Activated T-helper 1 cell treated with anti-CD3 and anti-CD28 coated beads, Interleukin-12 subunit alpha, Interleukin-12 subunit beta, Interleukin-2, Interleukin-4 antibody, amounts not matched to agents 30 ng/mL and 10 ng/mL and 1 ng/mL, durations not matched to agents 14 hours and 24 hours and 36 hours (primary cell): ENCODE measurements at regions of chr4 and their contacts with region 1.

Region 1: DNA sequence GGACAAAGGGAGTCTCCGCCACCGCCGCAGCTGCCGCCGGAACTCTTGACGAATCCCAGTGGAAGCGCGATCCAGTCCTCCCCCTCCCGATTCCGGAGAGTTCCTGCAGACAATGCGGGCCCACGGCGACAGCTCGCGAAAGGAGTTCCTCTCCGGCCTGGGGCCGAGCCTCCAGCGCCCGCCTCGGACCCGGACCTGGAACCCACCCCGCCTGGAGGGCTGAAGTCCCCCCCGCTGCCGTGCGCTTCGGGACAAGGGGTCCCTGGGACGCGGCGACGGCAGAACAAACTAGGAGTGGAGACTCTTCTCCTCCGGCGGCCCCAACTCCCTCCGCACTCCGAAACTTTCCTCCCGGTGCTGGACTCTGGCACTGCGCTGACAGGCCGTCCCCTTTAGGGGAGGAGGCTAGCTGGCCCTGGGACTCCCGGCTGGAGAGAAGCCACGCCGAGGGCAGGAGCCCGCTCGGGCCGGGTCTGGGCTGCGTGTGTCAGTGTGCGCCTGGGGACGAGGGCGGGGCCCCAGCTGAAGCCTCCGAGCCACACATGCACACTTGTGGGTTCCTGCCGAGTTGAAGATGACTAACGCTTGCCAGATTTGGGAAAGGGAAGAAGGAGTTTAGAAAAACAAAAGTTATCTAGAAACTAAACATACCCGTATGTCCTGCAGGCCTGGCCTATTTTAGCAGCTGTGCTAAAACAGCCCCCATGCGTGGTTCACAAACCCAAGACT is at the start of gene ANTXR2:
- DNase-seq: peak; percentile 73
- H3K4me3 Mint-ChIP-seq: peak within 1 kb of the TSS; percentile 99
- H3K27ac Mint-ChIP-seq: peak within 1 kb of the TSS; percentile 98
- H3K4me1 Mint-ChIP-seq: peaks cover 78% of the 10 kb centered on the region
- H3K27me3 Mint-ChIP-seq: peaks cover 1% of the 10 kb centered on the region
- total RNA-seq, gene ANTXR2: 24.9 and 29.8 TPM in 2 replicates

Region 2: DNA sequence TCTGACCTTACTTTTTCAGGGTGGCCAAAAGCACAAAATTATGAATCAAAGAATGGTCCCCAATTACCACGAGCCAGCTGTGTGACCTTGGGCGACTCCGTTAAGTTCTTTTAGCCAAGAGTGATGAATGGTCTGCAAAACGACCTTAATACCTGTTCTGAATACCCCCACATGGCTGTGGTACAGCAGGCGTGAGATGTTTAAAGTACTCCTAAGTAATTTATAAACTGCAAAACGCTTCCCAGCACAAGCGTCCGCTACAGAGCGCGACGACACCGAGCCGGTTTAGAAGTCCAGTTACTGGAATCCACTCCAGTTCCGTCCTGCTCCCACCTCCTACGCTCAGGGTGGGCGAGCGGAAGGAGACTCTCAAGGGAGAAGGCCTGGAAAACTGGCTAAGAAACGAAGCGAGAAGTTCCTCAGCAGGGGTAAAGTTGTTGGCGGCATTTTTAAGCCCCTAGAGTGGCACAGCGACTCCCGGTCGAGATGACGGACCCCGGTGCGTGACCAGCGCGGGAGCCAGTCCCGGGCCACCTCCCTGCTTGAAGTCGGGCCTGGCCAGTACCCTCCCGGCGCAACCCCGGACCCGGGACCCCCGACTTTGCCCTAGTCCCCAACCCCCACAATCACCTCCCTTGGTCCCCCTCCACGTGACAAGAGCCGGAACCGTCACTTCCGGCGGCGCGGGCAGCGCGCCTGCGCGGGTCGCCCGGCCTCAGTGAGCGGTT is 1297.4 kb before region 1 on chr4:
- intact Hi-C with region 1: loop called (anchors 10 kb)
- DNase-seq: peak; percentile 86
- H3K4me3 Mint-ChIP-seq: peak overlapping the region; percentile 95
- H3K27ac Mint-ChIP-seq: peak overlapping the region; percentile 96
- H3K4me1 Mint-ChIP-seq: peaks cover 38% of the 10 kb centered on the region
- H3K27me3 Mint-ChIP-seq: no peaks in the 10 kb centered on the region

Region 3: DNA sequence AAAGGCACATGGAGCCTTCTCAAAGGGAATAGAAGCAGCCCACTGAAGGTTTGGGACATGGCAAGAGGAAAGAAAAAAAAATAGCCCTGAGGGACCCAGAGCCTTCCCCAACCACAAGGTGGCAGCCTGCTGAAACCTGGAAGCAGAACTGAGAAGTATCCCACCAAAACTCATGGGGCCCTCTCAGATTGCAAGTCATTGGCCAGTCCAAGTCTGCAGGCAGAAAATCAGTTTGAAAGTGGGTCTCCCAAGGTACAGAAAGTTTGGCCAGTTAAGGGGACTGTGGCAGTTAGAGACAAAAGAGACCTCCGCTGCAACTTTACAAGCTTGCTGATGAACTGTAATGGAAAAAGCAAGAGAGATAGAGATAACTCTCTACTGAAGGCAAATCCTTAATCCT is 155.7 kb before region 1 on chr4:
- intact Hi-C with region 1: loop called (anchors 2 kb)
- DNase-seq: peak; percentile 25
- H3K4me3 Mint-ChIP-seq: no peak overlapping the region
- H3K27ac Mint-ChIP-seq: no peak overlapping the region
- H3K4me1 Mint-ChIP-seq: peaks cover 36% of the 10 kb centered on the region
- H3K27me3 Mint-ChIP-seq: no peaks in the 10 kb centered on the region

Region 4: GRCh38 chr4:80036949-80037685 is 35.8 kb before region 1 on chr4:
- intact Hi-C with region 1: loop called (anchors 2 kb)
- DNase-seq: no peak
- H3K4me3 Mint-ChIP-seq: peak overlapping the region; percentile 71
- H3K27ac Mint-ChIP-seq: peak overlapping the region; percentile 93
- H3K4me1 Mint-ChIP-seq: peaks cover 48% of the 10 kb centered on the region
- H3K27me3 Mint-ChIP-seq: no peaks in the 10 kb centered on the region

Region 5: GRCh38 chr4:80138551-80139538 is 65.9 kb after region 1 on chr4:
- intact Hi-C with region 1: loop called (anchors 1 kb)
- DNase-seq: peak; percentile 62
- H3K4me3 Mint-ChIP-seq: peak overlapping the region; percentile 62
- H3K27ac Mint-ChIP-seq: peak overlapping the region; percentile 88
- H3K4me1 Mint-ChIP-seq: peaks cover 72% of the 10 kb centered on the region
- H3K27me3 Mint-ChIP-seq: no peaks in the 10 kb centered on the region

Region 6: DNA sequence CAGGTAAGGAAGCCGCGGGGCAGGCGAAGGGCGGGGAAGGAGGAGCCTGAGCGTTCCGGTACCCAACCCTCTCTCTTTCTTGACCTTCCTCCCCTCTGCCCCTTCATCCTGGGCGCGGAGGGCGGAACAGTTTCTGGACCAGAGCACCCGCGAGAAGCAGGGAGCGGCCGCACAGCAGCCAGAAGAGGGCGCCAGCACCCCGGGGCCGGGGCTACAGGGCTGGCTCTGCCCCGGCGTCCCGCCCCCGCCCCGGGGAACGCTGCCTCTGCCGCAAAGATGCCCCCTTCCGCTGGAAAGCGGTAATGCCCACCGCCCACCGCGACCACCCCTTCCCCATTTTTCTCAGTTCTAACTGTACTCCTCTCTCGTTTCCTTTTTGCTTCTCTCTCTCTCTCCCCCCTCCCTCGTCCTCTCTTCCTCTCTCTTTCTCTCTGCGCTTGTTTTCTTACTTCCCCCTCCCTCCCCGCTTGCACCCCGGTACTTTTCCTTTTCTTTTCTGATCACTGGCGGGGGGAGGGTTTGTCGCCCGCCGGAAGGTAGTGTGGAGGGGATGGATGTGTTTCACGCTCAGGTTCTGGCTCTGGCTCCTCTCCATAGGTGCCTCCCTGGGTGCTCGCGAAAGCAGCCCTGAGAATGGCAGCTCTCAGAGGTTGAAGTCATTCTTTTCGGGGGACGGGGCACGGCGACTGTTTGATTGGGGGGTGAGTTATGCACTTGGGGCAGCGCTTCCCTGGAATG is 111.3 kb after region 1 on chr4:
- intact Hi-C with region 1: loop called (anchors 1 kb)
- DNase-seq: peak; percentile 92
- H3K4me3 Mint-ChIP-seq: peak overlapping the region; percentile 98
- H3K27ac Mint-ChIP-seq: peak overlapping the region; percentile 98
- H3K4me1 Mint-ChIP-seq: peaks cover 70% of the 10 kb centered on the region
- H3K27me3 Mint-ChIP-seq: peaks cover 15% of the 10 kb centered on the region